Natural killer cell (primary cell): ENCODE measurements at regions of chr1 and their contacts with region 1.

Region 1: DNA sequence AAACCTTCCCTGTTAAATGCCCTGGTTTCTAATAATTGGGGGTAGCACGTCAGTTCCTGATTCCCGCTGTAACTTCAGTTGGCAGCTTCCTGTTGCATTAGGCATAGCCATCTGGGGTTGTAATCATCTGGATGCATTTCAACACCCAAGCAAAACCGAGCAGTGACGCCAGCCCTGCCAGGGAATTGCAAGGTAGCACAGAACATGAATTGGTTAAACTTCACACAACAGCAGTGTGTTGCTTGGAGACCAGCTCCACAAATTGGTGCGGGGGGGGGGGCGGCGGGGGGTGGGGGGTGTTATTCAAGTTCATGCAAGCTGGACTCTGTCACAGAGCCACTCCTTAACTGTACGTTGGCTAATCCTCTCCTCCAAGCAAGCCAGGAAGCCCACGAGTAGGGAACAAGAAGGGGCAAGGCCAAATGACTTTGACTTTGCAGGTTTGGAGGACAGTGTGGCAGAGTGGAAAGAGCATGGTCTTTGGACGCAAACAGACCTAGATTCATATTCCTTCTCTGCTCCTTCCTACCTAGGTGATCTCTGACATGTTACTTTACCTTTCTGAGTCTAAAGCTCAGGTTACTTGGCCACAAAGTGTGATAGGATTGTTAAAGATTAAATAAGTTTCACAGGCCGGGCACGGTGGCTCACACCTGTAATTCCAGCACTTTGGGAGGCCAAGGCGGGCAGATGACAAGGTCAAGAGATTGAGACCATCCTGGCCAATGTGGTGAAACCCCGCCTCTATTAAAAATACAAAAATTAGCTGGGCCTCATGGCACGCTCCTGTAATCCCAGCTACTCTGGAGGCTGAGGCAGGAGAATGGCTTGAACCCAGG is 4.7 kb downstream of the LAX1 start:
- DNase-seq: peak in 1 of 2 donors; percentile 26
- ATAC-seq: peak in 2 of 3 donors; percentile 9 to 24
- H3K4me3 ChIP-seq: no peak overlapping the region
- H3K4me3 Mint-ChIP-seq: peak overlapping the region; percentile 71
- H3K27ac ChIP-seq: peak overlapping the region; percentile 42
- H3K27ac Mint-ChIP-seq: peak overlapping the region; percentile 71 to 86
- H3K4me1 ChIP-seq: peaks cover 43% of the 10 kb centered on the region
- H3K4me1 Mint-ChIP-seq: peaks cover 46 to 49% of the 10 kb centered on the region in 2 donors
- H3K27me3 ChIP-seq: no peaks in the 10 kb centered on the region
- H3K27me3 Mint-ChIP-seq: no peaks in the 10 kb centered on the region
- CTCF ChIP-seq: no peak

Region 2: GRCh38 chr1:203649999-203650855 is 119.5 kb before region 1 on chr1:
- intact Hi-C with region 1: loop called (anchors 10 kb)
- DNase-seq: peak; percentile 68 to 79
- ATAC-seq: peak; percentile 40 to 59 (median 42)
- H3K4me3 ChIP-seq: peak overlapping the region; percentile 26
- H3K4me3 Mint-ChIP-seq: peak overlapping the region; percentile 86
- H3K27ac ChIP-seq: peak overlapping the region; percentile 89
- H3K27ac Mint-ChIP-seq: peak overlapping the region; percentile 89 to 99
- H3K4me1 ChIP-seq: peaks cover 76% of the 10 kb centered on the region
- H3K4me1 Mint-ChIP-seq: peaks cover 66 to 70% of the 10 kb centered on the region in 2 donors
- H3K27me3 ChIP-seq: no peaks in the 10 kb centered on the region
- H3K27me3 Mint-ChIP-seq: no peaks in the 10 kb centered on the region
- CTCF ChIP-seq: no peak

Region 3: DNA sequence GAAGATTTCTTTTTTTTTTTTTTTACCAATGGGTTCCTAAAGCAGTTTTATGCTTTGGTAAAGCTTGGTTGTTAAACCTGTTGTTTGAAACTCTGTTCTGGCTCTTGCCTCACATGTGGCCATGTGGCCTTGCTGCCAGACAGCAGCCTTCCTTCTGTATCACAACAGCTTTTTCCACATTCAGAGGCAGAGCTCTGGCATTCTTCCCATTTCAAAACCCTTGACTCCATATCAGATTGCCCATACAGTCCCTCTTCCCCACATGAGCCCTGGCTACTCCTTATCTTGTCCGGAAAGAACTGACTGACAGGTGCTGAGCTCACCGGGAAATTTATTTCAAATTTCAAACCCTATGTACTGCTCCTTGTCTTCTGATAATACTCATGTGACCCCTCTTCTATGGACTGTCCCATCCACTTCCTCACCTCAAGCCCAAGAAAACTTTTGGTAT is 43.3 kb before region 1 on chr1:
- intact Hi-C with region 1: no loop called
- DNase-seq: no peak
- ATAC-seq: no peak
- H3K4me3 ChIP-seq: no peak overlapping the region
- H3K4me3 Mint-ChIP-seq: no peak overlapping the region
- H3K27ac ChIP-seq: no peak overlapping the region
- H3K27ac Mint-ChIP-seq: peak overlapping the region; percentile 69 to 83
- H3K4me1 ChIP-seq: peaks cover 2% of the 10 kb centered on the region
- H3K4me1 Mint-ChIP-seq: peaks cover 10 to 12% of the 10 kb centered on the region in 2 donors
- H3K27me3 ChIP-seq: no peaks in the 10 kb centered on the region
- H3K27me3 Mint-ChIP-seq: no peaks in the 10 kb centered on the region
- CTCF ChIP-seq: no peak

Region 4: DNA sequence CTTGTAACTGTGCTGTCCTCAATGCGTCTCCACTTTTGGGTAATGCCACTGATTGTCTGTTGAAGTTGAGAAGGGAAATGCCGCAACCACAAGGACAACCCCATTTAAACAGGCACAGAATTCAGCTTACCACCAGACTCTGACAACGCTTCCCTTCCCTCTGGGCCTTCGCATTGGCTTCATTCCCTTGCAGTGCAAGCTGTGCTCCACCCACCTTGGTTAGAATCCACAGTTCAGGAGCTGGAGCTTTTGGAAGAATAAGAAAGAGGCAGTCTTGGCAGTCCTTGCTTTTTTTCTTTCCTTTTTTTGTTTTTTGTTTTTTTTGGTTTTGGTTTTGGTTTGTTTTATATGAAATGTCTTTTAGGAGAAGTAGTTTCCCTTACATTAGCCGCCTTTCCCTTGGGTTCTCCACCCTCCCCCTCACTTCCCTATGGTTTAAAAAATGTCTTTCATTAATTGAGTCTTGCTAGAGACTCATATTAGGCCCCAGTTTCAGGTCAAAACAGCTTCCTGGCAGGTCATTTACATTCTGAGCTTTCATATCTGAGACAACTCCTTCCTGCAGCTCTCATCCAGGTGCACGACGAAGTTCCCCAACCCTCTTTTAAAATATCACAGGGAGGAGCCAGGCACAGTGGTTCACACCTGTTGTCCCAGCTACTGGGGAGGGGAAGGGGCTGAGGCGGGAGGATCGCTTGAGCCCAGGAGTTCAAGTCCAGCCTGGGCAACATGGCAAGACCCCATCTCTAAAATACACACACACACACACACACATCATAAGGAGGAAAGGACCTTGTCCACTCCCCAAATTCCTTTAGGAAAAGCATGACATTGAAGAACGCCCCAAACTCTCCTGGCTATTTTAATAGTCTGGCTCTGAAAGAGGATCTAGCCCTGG is 25.4 kb before region 1 on chr1:
- intact Hi-C with region 1: no loop called
- DNase-seq: peak in 1 of 2 donors; percentile 80
- ATAC-seq: peak; percentile 66 to 89 (median 82)
- H3K4me3 ChIP-seq: no peak overlapping the region
- H3K4me3 Mint-ChIP-seq: peak overlapping the region; percentile 50
- H3K27ac ChIP-seq: peak overlapping the region; percentile 46
- H3K27ac Mint-ChIP-seq: peak overlapping the region; percentile 86 to 90
- H3K4me1 ChIP-seq: peaks cover 10% of the 10 kb centered on the region
- H3K4me1 Mint-ChIP-seq: peaks cover 18 to 21% of the 10 kb centered on the region in 2 donors
- H3K27me3 ChIP-seq: no peaks in the 10 kb centered on the region
- H3K27me3 Mint-ChIP-seq: no peaks in the 10 kb centered on the region
- CTCF ChIP-seq: no peak

Region 5: GRCh38 chr1:203756021-203756420 is 13.7 kb before region 1 on chr1:
- intact Hi-C with region 1: loop called (anchors 1 kb)
- DNase-seq: peak in 1 of 2 donors; percentile 52
- ATAC-seq: peak; percentile 54 to 74 (median 61)
- H3K4me3 ChIP-seq: no peak overlapping the region
- H3K4me3 Mint-ChIP-seq: peak overlapping the region; percentile 38
- H3K27ac ChIP-seq: peak overlapping the region; percentile 44
- H3K27ac Mint-ChIP-seq: peak overlapping the region; percentile 74 to 87
- H3K4me1 ChIP-seq: peaks cover 31% of the 10 kb centered on the region
- H3K4me1 Mint-ChIP-seq: peaks cover 28 to 32% of the 10 kb centered on the region in 2 donors
- H3K27me3 ChIP-seq: no peaks in the 10 kb centered on the region
- H3K27me3 Mint-ChIP-seq: no peaks in the 10 kb centered on the region
- CTCF ChIP-seq: no peak

Region 6: DNA sequence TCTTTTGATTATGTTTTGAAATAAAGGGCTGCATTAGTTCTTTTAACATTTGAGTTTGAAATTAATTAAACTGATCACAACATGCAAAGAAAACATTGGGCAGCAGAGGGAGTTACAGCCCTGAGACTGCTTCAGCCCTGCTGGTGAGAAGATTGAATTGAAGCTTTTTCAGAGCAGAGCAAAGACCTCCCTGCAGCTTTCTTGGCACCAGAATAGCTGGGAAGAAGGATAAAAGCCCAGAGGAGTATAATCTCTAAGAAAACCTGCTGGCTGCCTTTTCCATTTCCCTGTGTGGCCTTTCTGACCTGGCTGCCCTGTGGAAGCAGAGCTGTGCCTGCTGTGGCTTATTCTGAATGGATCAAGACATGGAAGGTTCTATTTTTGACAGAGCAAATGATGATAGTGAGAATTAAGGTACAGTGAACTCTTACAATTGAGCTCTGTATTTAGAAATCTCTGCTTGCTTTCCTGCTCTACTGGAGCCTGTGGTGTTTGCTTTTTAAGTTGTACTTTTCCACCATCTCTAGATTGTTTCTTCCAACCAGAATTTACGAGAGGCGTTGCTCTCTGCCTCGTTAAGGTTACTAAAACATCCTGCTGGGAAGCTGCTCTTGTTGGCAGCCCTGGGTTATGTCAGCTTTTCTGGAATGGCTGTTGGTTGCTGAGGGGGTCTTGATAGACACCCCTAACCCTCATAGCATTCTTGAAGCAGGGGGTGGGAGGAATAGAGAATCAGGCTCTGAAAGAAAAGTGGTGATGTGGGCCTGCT is 101.6 kb after region 1 on chr1:
- intact Hi-C with region 1: no loop called
- DNase-seq: peak in 1 of 2 donors; percentile 61
- ATAC-seq: peak; percentile 67 to 68 (median 68)
- H3K4me3 ChIP-seq: no peak overlapping the region
- H3K4me3 Mint-ChIP-seq: no peak overlapping the region
- H3K27ac ChIP-seq: no peak overlapping the region
- H3K27ac Mint-ChIP-seq: peak overlapping the region in 1 of 2 donors; percentile 33
- H3K4me1 ChIP-seq: no peaks in the 10 kb centered on the region
- H3K4me1 Mint-ChIP-seq: peaks cover 0 to 5% of the 10 kb centered on the region in 2 donors
- H3K27me3 ChIP-seq: no peaks in the 10 kb centered on the region
- H3K27me3 Mint-ChIP-seq: no peaks in the 10 kb centered on the region
- CTCF ChIP-seq: peak; percentile 47